ENCODE measurements at regions of chr7 and their contacts with region 1.

Region 1: GRCh38 chr7:1537535-1538412 is 7.3 kb downstream of the MAFK start:
- H3K4me3 ChIP-seq: peak overlapping the region; percentile 56
- H3K27ac ChIP-seq: peak overlapping the region; percentile 25; the same call in 1 of the 2 replicates
- H3K4me1 ChIP-seq: peaks cover 22% of the 10 kb centered on the region
- CTCF ChIP-seq: no peak

Region 2: GRCh38 chr7:1493129-1493528 is 44.6 kb before region 1 on chr7:
- CTCF ChIA-PET with region 1: no interaction called
- POLR2A ChIA-PET with region 1: no interaction called
- H3K4me3 ChIP-seq: no peak overlapping the region
- H3K27ac ChIP-seq: no peak overlapping the region
- H3K4me1 ChIP-seq: no peaks in the 10 kb centered on the region
- CTCF ChIP-seq: no peak

Region 3: GRCh38 chr7:1503816-1504775 is 33.7 kb before region 1 on chr7 and contains the start of gene INTS1:
- CTCF ChIA-PET with region 1: interaction called, 4 read pairs
- POLR2A ChIA-PET with region 1: interaction called, 10 read pairs
- H3K4me3 ChIP-seq: peak within 1 kb of the TSS; percentile 89
- H3K27ac ChIP-seq: peak within 1 kb of the TSS; percentile 78; the same call in 1 of the 2 replicates
- H3K4me1 ChIP-seq: no peaks in the 10 kb centered on the region
- CTCF ChIP-seq: peak; percentile 50

Region 4: GRCh38 chr7:1569833-1570633 is 32.3 kb after region 1 on chr7 and contains the start of gene PSMG3:
- CTCF ChIA-PET with region 1: interaction called, 3 read pairs
- POLR2A ChIA-PET with region 1: interaction called, 15 read pairs
- H3K4me3 ChIP-seq: peak within 1 kb of the TSS; percentile 86
- H3K27ac ChIP-seq: peak within 1 kb of the TSS; percentile 80
- H3K4me1 ChIP-seq: peaks cover 10% of the 10 kb centered on the region; the same call in 1 of the 2 replicates
- CTCF ChIP-seq: peak; percentile 84

Region 5: DNA sequence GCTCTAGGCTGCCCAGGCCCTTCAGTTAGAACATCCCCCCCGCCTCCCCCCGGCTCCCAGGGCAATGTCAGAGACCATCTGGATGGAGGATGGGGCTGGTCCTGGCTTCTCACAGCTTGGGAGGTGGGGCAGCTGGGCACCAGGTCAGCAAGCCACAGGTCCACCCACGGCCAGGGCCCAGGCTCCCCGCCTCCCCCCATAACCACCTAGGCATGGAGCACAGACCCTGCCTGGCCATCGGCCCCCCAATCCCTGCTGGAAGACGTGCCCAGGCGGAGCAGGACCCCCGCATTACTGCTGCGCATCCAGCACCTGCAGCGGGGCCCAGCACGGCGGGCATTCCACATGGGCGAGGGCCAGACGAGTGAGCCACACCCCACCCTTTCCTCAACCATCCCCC is 301.9 kb after region 1 on chr7:
- CTCF ChIA-PET with region 1: no interaction called
- POLR2A ChIA-PET with region 1: no interaction called
- H3K4me3 ChIP-seq: no peak overlapping the region
- H3K27ac ChIP-seq: no peak overlapping the region
- H3K4me1 ChIP-seq: no peaks in the 10 kb centered on the region
- CTCF ChIP-seq: no peak

Measured in HEK293 (cell line).